Endothelial cell of umbilical vein (primary cell): ENCODE measurements at regions of chr5 and their contacts with region 1.

Region 1: GRCh38 chr5:122500245-122501075 is 188.4 kb downstream of the SNCAIP start:
- DNase-seq: peak; percentile 49
- H3K4me3 ChIP-seq: no peak overlapping the region
- H3K27ac ChIP-seq: no peak overlapping the region
- H3K4me1 ChIP-seq: no peaks in the 10 kb centered on the region
- H3K27me3 ChIP-seq: peaks cover 3 to 6% of the 10 kb centered on the region in 2 experiments
- CTCF ChIP-seq: peak; percentile 37 to 55
- POLR2A ChIP-seq: no peak

Region 2: DNA sequence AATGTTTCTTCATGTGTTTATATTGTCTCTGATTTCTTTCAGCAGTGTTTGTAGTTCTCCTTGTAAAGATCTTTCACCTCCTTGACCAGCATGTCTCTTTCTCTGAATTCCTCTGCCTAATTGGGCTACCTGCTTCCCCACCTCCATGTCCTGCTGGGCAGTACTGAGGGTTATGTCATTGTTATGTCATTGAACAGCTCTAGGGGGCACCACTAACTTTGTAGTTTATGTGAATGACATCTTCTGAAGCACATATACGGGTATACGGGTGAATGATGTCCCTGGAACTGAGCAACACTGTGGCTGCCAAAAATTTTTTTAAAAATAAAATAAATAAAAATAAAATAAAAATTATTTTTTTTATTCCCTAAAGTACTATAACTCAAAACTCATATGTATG is 205.3 kb before region 1 on chr5:
- CTCF ChIA-PET with region 1: no interaction called
- POLR2A ChIA-PET with region 1: no interaction called
- dilution Hi-C with region 1: no loop called
- intact Hi-C with region 1: loop called (anchors 5 kb)
- DNase-seq: peak; percentile 37
- H3K4me3 ChIP-seq: no peak overlapping the region
- H3K27ac ChIP-seq: no peak overlapping the region
- H3K4me1 ChIP-seq: no peaks in the 10 kb centered on the region
- H3K27me3 ChIP-seq: peaks cover 0 to 4% of the 10 kb centered on the region in 2 experiments
- CTCF ChIP-seq: peak; percentile 21 to 43
- POLR2A ChIP-seq: no peak

Region 3: DNA sequence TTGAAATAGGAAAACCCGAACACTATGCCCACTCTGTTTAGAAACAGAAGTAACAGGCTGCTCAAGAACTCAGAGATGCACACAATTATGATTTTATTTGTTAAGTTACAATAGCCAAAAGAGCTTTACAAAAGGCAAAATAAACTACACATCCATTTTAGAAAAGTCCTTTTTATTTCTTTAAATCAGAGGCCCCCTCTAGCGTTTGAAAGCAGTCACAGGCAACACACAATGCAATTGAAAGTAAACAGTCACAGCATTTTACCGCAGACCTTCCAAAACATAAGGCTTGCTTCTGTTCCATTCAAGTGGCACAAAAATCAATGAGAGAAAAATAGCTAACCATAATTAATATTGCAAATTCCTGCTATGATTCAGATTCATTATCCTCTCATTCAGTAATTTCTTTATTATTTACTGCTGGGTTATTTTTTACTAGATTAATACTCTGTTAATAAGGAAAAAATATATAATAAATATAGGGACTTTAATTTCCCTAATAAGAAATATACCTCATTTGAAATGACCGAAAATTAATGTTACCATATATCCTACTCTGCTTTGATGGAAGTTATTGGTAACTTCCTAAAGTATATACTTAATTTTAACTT is 844.5 kb after region 1 on chr5:
- CTCF ChIA-PET with region 1: interaction called, 5 read pairs
- POLR2A ChIA-PET with region 1: no interaction called
- dilution Hi-C with region 1: no loop called
- intact Hi-C with region 1: loop called (anchors 1 kb)
- DNase-seq: peak; percentile 45
- H3K4me3 ChIP-seq: no peak overlapping the region
- H3K27ac ChIP-seq: no peak overlapping the region
- H3K4me1 ChIP-seq: no peaks in the 10 kb centered on the region
- H3K27me3 ChIP-seq: no peaks in the 10 kb centered on the region
- CTCF ChIP-seq: peak; percentile 34 to 55
- POLR2A ChIP-seq: no peak

Region 4: GRCh38 chr5:123371575-123372179 is 871.2 kb after region 1 on chr5:
- CTCF ChIA-PET with region 1: interaction called, 10 read pairs
- POLR2A ChIA-PET with region 1: no interaction called
- dilution Hi-C with region 1: no loop called
- intact Hi-C with region 1: loop called (anchors 5 kb)
- DNase-seq: no peak
- H3K4me3 ChIP-seq: no peak overlapping the region
- H3K27ac ChIP-seq: no peak overlapping the region
- H3K4me1 ChIP-seq: no peaks in the 10 kb centered on the region
- H3K27me3 ChIP-seq: no peaks in the 10 kb centered on the region
- CTCF ChIP-seq: peak; percentile 40 to 49
- POLR2A ChIP-seq: no peak

Region 5: GRCh38 chr5:123423278-123424149 is 923.1 kb after region 1 on chr5 and contains the start of gene CEP120:
- CTCF ChIA-PET with region 1: interaction called, 14 read pairs
- POLR2A ChIA-PET with region 1: no interaction called
- dilution Hi-C with region 1: no loop called
- intact Hi-C with region 1: no loop called
- DNase-seq: peak; percentile 100
- H3K4me3 ChIP-seq: peak within 1 kb of the TSS; percentile 81 to 94 (median 93)
- H3K27ac ChIP-seq: peak within 1 kb of the TSS; percentile 62
- H3K4me1 ChIP-seq: peaks cover 11% of the 10 kb centered on the region
- H3K27me3 ChIP-seq: no peaks in the 10 kb centered on the region
- CTCF ChIP-seq: peak; percentile 88
- POLR2A ChIP-seq: peak; percentile 82
- total RNA-seq, gene CEP120: 15.0 and 18.8 TPM in 2 replicates